Left ventricle myocardium inferior (tissue), 1 donor: ENCODE measurements at regions of chrX and their contacts with region 1.

Region 1: DNA sequence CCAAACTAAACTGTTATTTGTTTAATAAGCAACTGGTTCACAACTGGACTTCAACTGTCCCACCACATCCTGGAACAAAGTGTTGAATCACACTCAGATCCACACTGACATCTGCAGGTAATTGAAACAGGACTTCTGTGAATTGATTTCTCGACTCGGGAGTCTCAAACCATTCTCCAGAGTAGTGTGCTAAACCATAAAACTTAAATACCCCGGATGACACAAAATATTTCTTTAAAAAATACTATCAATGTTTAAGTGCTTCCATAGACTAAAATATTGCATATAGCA is 95.4 kb upstream of the PLAC1 start:
- DNase-seq: no peak
- H3K4me3 ChIP-seq: no peak overlapping the region
- H3K27ac ChIP-seq: no peak overlapping the region
- H3K4me1 ChIP-seq: no peaks in the 10 kb centered on the region
- H3K27me3 ChIP-seq: no peaks in the 10 kb centered on the region
- CTCF ChIP-seq: peak; percentile 58

Region 2: DNA sequence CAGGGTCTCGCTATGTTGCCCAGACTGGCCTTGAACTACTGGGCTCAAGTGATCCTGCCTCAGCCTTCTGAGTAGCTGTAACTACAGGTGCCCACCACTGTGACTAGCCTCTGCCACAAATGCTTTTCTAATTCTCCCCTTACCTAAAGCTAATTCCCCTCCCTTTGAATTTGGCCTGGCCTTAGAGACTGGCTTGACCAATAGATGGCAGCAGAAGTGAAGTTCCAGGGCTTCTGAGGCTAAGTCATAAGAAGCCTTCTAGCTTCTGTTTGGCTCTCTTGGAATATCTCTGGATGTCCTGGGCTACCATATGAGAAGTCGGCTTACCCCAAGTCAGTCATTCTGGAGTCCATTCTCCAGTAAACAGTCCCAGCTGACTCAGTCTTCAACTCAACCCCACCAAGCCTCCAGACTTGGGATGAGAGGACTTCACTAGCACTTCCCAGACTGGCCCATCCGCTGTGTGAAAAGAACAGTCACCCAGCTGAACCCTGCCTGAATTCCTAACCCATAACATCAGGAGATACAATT is 232.7 kb before region 1 on chrX:
- intact Hi-C with region 1: loop called (anchors 10 kb)
- DNase-seq: no peak
- H3K4me3 ChIP-seq: no peak overlapping the region
- H3K27ac ChIP-seq: no peak overlapping the region
- H3K4me1 ChIP-seq: no peaks in the 10 kb centered on the region
- H3K27me3 ChIP-seq: no peaks in the 10 kb centered on the region
- CTCF ChIP-seq: peak; percentile 66